ENCODE measurements at regions of chr6 and their contacts with region 1.

Region 1: GRCh38 chr6:52984247-52984646 is 10.8 kb downstream of the GSTA4 start:
- DNase-seq: no peak
- H3K4me3 ChIP-seq: no peak overlapping the region
- H3K27ac ChIP-seq: no peak overlapping the region
- H3K4me1 ChIP-seq: no peaks in the 10 kb centered on the region
- H3K27me3 ChIP-seq: no peaks in the 10 kb centered on the region
- CTCF ChIP-seq: no peak
- POLR2A ChIP-seq: no peak

Region 2: DNA sequence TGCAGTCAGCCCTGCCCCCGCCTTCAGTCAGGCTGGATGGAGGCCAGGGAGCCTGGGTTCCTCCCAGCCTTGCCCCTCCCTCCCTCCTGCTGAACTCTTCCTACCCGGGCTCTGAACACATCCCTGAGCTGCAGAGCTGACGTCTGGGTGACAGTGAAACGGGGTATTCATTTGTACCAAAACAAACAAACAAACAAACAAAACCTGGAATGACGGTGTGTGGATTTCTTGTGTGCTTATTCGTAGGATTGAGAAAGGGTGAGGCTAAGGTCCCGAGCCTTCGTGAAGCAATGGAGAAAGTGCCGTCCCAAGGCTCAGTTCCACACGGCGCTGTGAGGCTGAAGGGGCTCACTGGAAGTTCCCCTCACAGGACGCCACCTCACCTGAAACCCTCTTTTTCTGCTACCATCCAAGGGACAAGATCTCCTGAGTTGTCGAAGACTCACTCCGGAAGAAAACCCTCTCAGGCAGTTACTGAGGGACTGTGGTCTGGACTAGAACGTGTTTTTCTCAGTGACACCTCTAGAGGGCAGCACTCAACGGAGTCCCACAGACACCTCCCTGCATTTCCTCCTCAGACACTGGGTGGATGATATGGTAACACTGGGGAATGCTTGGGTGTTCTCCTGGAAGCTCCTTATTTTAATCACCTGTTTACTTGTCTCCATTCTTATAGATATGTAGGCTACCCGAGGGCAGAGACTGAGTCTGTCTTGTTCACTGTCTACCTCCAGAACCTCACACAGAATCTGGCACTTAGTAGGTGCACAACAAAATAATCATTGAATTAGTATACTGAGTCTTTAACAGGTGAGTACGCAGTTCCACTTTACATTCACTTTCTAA is 102.0 kb before region 1 on chr6:
- intact Hi-C with region 1: loop called (anchors 10 kb)
- DNase-seq: peak; percentile 68 to 70
- H3K4me3 ChIP-seq: peak overlapping the region in 2 of 3 donors; percentile 34 to 38
- H3K27ac ChIP-seq: peak overlapping the region in 2 of 3 donors; percentile 1 to 42
- H3K4me1 ChIP-seq: no peaks in the 10 kb centered on the region
- H3K27me3 ChIP-seq: no peaks in the 10 kb centered on the region
- CTCF ChIP-seq: peak; percentile 33 to 83 (median 70)
- POLR2A ChIP-seq: no peak

Measured in thyroid gland (tissue), 4 donors.